ENCODE measurements at regions of chr12 and their contacts with region 1.

Region 1: GRCh38 chr12:1795785-1796514 is 24.4 kb upstream of the LRTM2 start:
- DNase-seq: peak; percentile 95
- CTCF ChIP-seq: peak; percentile 96

Region 2: GRCh38 chr12:1634590-1635191 is 161.3 kb before region 1 on chr12:
- CTCF ChIA-PET with region 1: interaction called, 95 read pairs
- POLR2A ChIA-PET with region 1: no interaction called
- DNase-seq: peak; percentile 70
- CTCF ChIP-seq: peak; percentile 86

Region 3: DNA sequence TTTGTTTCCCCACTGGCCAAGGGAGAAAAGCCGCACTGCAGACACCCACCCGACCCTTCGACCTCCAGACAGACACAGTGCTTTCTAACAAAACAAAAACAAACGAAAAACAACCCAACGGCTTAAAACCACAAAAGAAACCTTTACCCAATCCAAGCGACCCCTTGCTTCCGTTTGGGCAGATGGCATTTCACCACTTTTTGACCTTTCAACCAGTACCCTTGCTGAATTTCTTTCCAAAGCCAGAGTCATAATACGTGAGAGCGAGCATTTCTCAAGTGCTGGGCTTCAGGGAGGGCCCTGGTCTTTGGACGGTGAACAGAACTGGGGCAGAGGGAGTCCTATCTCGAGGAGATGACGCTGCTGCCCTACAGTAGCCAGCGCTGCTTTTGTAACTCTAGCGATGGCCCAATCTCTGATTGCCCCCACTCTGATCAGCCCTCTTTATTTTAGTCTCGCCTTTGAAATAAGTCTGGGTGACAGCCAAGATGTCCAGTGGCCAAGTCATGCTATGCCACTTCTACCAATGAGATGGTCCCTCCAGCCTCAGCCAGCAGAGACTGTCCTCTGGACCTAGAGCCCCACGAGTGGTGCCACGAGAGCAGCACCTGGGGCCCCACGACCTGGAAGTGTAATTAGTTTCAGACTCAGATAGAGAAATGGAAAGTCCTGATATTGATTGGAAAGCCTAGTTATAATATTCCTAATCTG is 127.0 kb before region 1 on chr12:
- CTCF ChIA-PET with region 1: interaction called, 21 read pairs
- POLR2A ChIA-PET with region 1: no interaction called
- DNase-seq: no peak
- CTCF ChIP-seq: no peak

Region 4: DNA sequence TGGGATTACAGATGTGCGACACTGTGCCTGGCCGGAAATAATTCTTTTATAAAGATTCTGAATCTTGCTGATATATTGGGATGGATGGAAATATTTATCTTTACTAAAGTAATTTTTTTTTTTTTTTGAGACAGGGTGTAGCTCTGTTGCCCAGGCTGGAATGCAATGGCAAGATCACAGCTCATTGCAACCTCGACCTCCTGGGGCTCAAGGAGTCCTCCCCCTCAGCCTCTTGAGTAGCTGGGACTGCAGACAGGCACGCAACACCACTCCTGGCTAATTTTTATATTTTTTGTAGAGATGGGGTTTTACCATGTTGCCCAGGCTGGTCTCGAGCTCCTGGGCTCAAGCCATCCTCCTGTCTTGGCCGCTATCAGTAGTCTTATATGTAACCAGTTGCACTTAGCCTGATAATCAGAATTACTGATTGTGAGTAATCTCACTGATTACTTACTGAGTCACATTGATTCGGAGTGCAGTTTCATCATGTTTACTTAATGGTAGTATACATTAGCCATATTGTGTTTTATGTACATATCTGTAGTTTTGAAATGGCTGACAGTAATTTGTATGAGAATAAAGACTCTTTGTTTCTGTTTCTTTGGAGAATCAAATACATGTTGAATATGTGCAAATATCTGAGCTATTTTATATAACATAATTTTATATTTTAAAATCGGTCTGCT is 26.0 kb before region 1 on chr12:
- CTCF ChIA-PET with region 1: interaction called, 19 read pairs
- POLR2A ChIA-PET with region 1: no interaction called
- DNase-seq: no peak
- CTCF ChIP-seq: no peak

Region 5: GRCh38 chr12:1781772-1782171 is 14.2 kb before region 1 on chr12:
- CTCF ChIA-PET with region 1: interaction called, 25 read pairs
- POLR2A ChIA-PET with region 1: no interaction called
- DNase-seq: no peak
- CTCF ChIP-seq: no peak

Measured in GM10248 (cell line).